Ascending aorta (tissue), 2 donors: ENCODE measurements at regions of chr5 and their contacts with region 1.

Region 1: GRCh38 chr5:14399054-14399692 is 182.4 kb upstream of the OTULINL start:
- DNase-seq: no peak
- H3K4me3 ChIP-seq: no peak overlapping the region
- H3K27ac ChIP-seq: no peak overlapping the region
- H3K4me1 ChIP-seq: peaks cover 0 to 12% of the 10 kb centered on the region in 2 donors
- H3K27me3 ChIP-seq: no peaks in the 10 kb centered on the region
- CTCF ChIP-seq: peak; percentile 36 to 69 (median 61)

Region 2: DNA sequence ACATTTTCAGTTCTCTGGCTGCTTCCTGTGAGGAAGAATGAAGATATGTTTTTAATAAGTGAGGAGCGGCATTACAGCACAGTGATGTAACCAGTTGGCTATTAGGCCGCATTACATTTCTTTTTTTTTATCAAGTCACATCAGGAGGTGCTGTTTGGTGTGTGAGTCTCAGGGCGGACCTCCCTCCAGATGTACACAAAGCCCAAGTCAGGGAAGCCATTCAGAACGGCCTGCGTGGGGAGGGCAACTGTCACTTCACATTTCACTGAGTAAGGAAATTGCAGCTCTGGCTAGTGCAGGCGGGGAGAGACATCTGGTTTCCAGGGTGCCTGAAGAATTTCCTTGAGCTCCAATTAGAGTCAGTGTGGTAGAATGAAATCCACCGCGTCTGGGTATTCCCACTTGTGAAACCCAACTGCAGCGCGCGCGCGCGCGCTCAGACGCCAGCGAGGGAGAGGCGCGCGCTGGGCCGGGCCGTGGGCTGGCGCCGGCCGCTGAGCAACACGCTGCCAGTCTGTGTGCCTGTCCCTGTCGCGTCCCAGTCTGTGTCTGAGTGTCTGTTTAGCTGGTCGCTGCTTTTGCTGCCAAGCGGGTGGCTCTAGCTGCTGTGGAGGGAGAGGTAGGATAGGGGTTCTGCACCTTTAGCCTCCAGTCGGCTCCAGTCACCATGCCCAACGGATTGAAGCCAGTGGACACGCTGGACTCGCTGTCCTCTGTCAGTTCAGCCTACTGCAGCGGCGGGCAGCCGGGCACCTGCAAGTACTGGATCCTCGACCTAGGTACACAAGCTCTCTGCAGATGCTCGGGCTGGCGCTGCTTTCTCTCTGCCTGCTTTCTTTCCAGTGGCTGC is 41.6 kb after region 1 on chr5:
- intact Hi-C with region 1: loop called (anchors 5 kb)
- DNase-seq: peak in 1 of 2 donors; percentile 77
- H3K4me3 ChIP-seq: peak overlapping the region; percentile 20 to 59
- H3K27ac ChIP-seq: peak overlapping the region; percentile 46 to 72
- H3K4me1 ChIP-seq: peaks cover 3 to 10% of the 10 kb centered on the region in 2 donors
- H3K27me3 ChIP-seq: no peaks in the 10 kb centered on the region
- CTCF ChIP-seq: no peak

Region 3: DNA sequence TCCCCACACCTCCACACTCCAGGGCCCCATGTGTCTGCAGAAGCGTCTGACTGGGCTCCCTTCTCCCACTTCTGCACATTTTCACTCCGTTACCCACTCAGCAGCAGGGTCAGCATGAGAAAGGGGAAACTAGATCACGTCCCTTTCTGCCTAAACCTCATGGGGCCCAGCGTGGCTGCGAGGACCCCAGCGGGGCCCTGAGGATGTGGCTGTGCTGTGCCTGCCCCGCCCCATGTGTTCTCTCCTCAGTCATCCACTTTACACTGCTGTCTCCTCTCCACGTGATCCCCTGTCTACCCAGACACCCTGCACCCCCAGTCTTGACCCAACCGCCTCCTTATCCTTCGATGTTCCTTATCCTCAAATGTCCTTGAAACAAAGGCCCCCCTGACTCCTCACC is 122.6 kb after region 1 on chr5:
- intact Hi-C with region 1: no loop called
- DNase-seq: no peak
- H3K4me3 ChIP-seq: no peak overlapping the region
- H3K27ac ChIP-seq: no peak overlapping the region
- H3K4me1 ChIP-seq: no peaks in the 10 kb centered on the region
- H3K27me3 ChIP-seq: no peaks in the 10 kb centered on the region
- CTCF ChIP-seq: no peak